A549 (cell line): ENCODE measurements at regions of chr7 and their contacts with region 1.

Region 1: DNA sequence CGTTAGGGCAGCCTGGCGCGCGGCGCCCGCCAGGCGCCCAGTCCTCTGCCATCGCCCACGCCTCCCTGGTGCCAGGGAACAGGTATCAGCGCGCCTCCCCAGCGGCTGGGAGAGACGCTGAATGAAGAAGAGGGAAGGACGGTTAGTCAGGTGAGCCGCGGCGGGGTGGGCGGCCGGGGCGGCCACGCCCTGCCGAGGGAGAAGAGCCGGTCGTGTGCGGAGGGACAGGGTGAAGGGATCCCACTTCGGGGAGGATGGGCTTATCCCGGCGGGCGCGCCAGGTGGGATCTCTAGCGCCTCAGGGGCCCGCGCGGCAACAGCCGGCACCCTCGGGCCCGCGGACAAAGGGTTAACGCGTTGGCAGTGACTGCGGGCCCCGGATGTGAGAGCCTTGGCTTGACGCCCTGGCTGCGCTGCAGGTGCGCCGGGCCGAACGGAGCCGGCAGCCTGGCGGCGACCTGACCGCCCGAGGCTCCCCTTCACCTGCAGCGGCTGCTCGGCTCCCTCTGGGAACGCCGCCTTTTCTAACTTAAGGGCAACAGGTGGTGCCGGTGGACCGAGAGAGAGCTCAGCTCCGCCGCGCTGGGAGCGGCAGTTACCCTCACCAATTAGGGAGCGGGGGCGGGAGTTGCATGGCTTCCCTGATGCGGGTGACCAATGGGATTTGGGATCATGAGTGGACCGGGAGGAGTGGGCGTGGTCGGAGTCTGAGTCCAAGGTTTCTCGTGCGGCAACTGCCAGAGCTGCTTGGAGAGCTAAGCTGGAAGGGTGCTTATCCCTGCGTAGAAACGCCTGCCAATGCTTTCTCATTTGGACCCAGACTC is at the start of gene ARL4A:
- DNase-seq: peak; percentile 98
- ATAC-seq: peak; percentile 84 to 90
- H3K4me3 ChIP-seq: peak within 1 kb of the TSS; percentile 92
- H3K27ac ChIP-seq: peak within 1 kb of the TSS; percentile 98 to 99
- H3K4me1 ChIP-seq: peaks cover 42% of the 10 kb centered on the region; the same call in 2 of the 3 replicates
- CTCF ChIP-seq: peak; percentile 46
- EP300 ChIP-seq: no peak
- POLR2A ChIP-seq: peak; percentile 87
- RAD21 ChIP-seq: peak; percentile 79 to 94
- polyA plus RNA-seq, gene ARL4A: 58.9 and 76.1 TPM in 2 replicates

Region 2: DNA sequence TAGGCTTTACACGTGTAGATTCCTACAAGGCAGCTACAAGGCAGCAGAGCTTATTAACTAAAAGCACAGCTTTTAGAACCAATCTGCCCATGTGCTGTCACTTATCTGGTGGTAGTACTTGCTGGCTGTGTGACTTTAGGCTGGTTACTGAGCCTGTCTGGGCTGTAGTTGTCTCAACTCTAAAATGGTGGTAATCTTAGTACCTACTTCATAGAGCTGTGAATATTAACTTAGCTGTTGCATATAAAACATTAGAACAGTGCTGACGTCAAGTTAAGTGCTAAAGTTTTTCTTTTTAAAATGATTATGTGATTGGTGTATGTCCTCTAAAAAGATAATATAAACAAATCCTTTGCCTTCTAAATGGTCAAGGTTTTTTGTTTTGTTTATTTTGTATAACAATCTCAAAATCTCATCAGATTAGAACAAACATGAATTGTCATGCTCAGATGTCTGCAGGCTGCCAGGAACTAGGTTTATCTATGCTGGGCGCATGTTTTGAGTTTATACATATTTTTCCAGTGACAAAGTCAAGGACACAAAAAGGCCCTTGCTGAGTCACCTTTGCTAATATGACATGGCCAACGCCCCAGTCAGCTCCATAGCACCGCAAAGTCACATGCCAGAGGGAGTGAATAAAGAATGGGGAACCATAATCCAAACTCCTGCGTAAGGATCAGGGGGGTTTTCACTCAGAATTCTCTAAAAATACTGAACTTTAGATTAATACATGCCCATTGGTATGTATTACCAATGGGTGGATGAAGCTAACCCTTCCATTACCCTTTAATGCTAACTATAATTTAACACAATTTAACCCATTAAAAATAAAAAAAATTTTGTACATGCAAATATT is 39.5 kb before region 1 on chr7:
- CTCF ChIA-PET with region 1: interaction called, 19 read pairs
- POLR2A ChIA-PET with region 1: interaction called, 7 read pairs
- DNase-seq: peak; percentile 44 to 88
- ATAC-seq: peak; percentile 91 to 95
- H3K4me3 ChIP-seq: no peak overlapping the region
- H3K27ac ChIP-seq: peak overlapping the region; percentile 68 to 84
- H3K4me1 ChIP-seq: peaks cover 50% of the 10 kb centered on the region
- CTCF ChIP-seq: no peak
- EP300 ChIP-seq: peak in 1 of 2 experiments; percentile 61; a peak in 2 of 5 replicates
- POLR2A ChIP-seq: no peak
- RAD21 ChIP-seq: no peak; a peak in 1 of 5 replicates

Region 3: GRCh38 chr7:12727455-12728191 is 40.5 kb after region 1 on chr7:
- CTCF ChIA-PET with region 1: interaction called, 16 read pairs
- POLR2A ChIA-PET with region 1: no interaction called
- DNase-seq: no peak
- ATAC-seq: no peak
- H3K4me3 ChIP-seq: no peak overlapping the region
- H3K27ac ChIP-seq: 0 out of 6 replicates have a peak overlapping the region, but pooled peaks of 1 of the 2 experiments have one; percentile 3
- H3K4me1 ChIP-seq: peaks cover 25% of the 10 kb centered on the region
- CTCF ChIP-seq: no peak
- EP300 ChIP-seq: no peak
- POLR2A ChIP-seq: no peak
- RAD21 ChIP-seq: no peak

Region 4: GRCh38 chr7:12990440-12990839 is 303.3 kb after region 1 on chr7:
- CTCF ChIA-PET with region 1: interaction called, 14 read pairs
- POLR2A ChIA-PET with region 1: interaction called, 5 read pairs
- DNase-seq: no peak
- ATAC-seq: no peak
- H3K4me3 ChIP-seq: no peak overlapping the region
- H3K27ac ChIP-seq: no peak overlapping the region
- H3K4me1 ChIP-seq: peaks cover 28% of the 10 kb centered on the region
- CTCF ChIP-seq: no peak
- EP300 ChIP-seq: no peak
- POLR2A ChIP-seq: no peak
- RAD21 ChIP-seq: no peak

Region 5: GRCh38 chr7:13111230-13111629 is 424.1 kb after region 1 on chr7:
- CTCF ChIA-PET with region 1: interaction called, 80 read pairs
- POLR2A ChIA-PET with region 1: interaction called, 15 read pairs
- DNase-seq: no peak
- ATAC-seq: no peak
- H3K4me3 ChIP-seq: no peak overlapping the region
- H3K27ac ChIP-seq: no peak overlapping the region
- H3K4me1 ChIP-seq: peaks cover 14% of the 10 kb centered on the region; the same call in 2 of the 3 replicates
- CTCF ChIP-seq: no peak
- EP300 ChIP-seq: no peak
- POLR2A ChIP-seq: no peak
- RAD21 ChIP-seq: no peak

Region 6: DNA sequence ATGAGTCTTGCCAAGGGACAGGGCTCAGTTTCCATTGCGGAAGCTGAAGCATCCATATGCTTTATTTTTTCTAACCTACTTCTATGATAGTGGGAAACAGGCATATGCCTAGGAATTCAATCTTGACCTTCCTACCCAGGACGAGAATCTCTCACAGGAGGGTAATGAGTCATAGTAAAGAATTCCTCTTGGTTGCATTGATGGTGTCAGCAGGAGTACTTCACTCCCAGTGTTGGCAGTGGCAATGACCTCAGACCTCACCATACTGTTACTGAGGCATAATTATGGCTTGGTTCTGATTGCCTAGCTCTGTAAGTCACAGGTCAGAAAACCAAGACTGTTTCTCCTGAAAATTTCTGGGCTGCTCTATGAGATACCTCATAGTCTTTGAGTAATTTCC is 553.2 kb after region 1 on chr7:
- CTCF ChIA-PET with region 1: interaction called, 10 read pairs
- POLR2A ChIA-PET with region 1: no interaction called
- DNase-seq: peak; percentile 48 to 76
- ATAC-seq: peak; percentile 95 to 97
- H3K4me3 ChIP-seq: no peak overlapping the region
- H3K27ac ChIP-seq: peak overlapping the region; percentile 28 to 59; a peak in 4 of 6 replicates
- H3K4me1 ChIP-seq: peaks cover 18% of the 10 kb centered on the region
- CTCF ChIP-seq: no peak
- EP300 ChIP-seq: no peak
- POLR2A ChIP-seq: no peak
- RAD21 ChIP-seq: no peak